ENCODE measurements at regions of chr4 and their contacts with region 1.

Region 1: GRCh38 chr4:15882675-15883086 is 55.9 kb downstream of the FGFBP1 start:
- DNase-seq: peak; percentile 47 to 51
- H3K4me3 ChIP-seq: no peak overlapping the region
- H3K27ac ChIP-seq: no peak overlapping the region
- H3K4me1 ChIP-seq: peaks cover 0 to 6% (median 0%) of the 10 kb centered on the region in 4 experiments; a peak in 1 of 7 replicates
- H3K27me3 ChIP-seq: no peaks in the 10 kb centered on the region
- CTCF ChIP-seq: peak; percentile 77 to 99 (median 90)
- EP300 ChIP-seq: no peak
- POLR2A ChIP-seq: no peak
- RAD21 ChIP-seq: peak; percentile 89 to 90

Region 2: DNA sequence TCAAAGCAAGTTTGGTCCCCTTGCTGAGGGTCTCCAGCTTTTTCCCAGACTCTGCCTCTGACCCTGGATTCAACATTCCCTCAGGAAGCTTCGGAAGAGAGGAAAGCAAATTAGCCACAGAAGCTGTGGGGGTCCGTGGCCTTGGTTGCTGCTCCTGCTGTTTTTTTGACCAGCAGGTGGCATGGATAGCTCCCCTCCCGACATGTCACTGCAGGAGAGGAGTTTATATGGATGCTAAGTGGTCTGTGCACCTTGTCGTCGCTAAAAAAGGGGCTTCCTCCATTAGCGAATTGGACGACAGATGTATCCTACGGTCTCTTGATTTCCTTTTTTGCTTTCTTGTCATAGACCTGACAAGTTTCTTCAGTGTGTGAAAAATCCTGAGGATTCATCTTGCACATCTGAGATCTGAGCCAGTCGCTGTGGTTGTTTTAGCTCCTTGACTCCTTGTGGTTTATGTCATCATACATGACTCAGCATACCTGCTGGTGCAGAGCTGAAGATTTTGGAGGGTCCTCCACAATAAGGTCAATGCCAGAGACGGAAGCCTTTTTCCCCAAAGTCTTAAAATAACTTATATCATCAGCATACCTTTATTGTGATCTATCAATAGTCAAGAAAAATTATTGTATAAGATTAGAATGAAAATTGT is 34.4 kb before region 1 on chr4:
- CTCF ChIA-PET with region 1: interaction called, 20 read pairs
- POLR2A ChIA-PET with region 1: no interaction called
- DNase-seq: no peak
- H3K4me3 ChIP-seq: no peak overlapping the region
- H3K27ac ChIP-seq: no peak overlapping the region
- H3K4me1 ChIP-seq: no peaks in the 10 kb centered on the region
- H3K27me3 ChIP-seq: peaks cover 0 to 1% (median 0%) of the 10 kb centered on the region in 4 experiments; a peak in 1 of 7 replicates
- CTCF ChIP-seq: no peak
- EP300 ChIP-seq: no peak
- POLR2A ChIP-seq: no peak
- RAD21 ChIP-seq: no peak

Region 3: DNA sequence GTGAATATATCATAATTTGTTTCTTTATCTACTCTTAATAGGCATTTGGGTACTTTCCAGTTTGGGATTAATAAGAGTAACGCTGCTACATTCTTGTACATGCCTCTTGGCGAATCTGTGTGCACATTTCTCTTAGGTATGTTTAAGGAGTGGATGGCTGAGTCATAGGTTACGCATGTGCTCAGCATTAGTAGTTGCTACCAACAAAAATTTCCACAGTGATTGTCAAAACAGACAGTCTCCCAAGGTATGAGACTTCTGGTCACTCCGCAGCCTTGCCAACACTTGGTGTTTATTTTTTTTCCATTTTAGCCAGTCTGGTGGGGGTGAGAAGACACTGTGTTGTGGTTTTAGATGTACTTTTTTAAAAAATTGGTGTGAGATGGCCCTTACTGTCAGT is 11.3 kb after region 1 on chr4:
- CTCF ChIA-PET with region 1: interaction called, 28 read pairs
- POLR2A ChIA-PET with region 1: no interaction called
- DNase-seq: no peak
- H3K4me3 ChIP-seq: no peak overlapping the region
- H3K27ac ChIP-seq: no peak overlapping the region
- H3K4me1 ChIP-seq: peaks cover 0 to 5% (median 0%) of the 10 kb centered on the region in 4 experiments; a peak in 2 of 7 replicates
- H3K27me3 ChIP-seq: no peaks in the 10 kb centered on the region
- CTCF ChIP-seq: no peak
- EP300 ChIP-seq: no peak
- POLR2A ChIP-seq: no peak
- RAD21 ChIP-seq: no peak

Region 4: DNA sequence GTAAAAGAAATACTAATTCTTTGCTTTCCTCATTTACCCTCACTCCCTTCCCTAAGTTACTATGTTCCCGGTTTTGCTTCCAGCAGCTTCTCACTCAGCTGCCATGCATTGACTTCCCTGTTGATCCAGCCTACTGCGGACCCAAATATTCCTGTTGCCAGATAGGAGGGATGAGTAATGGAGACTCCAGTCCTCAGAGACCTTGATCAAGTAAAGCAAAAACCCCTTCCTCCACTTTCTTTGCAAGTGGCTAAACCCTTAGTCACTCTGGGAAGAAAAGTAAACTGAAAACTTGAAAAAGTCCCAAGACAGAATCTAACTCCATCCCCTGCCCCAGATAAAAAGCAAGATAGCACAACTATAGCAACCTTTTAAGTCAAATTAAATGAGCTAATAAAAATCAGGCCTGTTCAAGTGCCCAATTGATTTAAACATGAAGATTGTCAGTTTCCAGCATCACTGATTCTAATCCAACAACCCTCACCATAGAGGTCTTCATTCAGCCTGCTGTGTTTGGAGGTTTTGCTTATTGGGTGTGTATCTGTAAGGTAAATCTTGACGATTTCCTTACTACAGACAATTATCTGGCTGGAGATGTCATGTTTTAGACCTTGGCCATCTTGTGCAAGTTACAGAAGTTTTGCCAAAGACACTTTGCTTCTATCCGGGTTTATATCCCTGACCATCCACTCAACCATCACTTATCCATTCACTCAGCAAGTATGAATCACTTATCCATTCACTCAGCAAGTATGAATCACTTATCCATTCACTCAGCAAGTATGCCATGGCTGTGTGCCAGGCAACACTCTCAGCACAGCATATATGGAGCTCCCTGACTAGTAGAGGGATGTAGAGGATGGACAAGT is 38.3 kb after region 1 on chr4:
- CTCF ChIA-PET with region 1: interaction called, 40 read pairs
- POLR2A ChIA-PET with region 1: no interaction called
- DNase-seq: no peak
- H3K4me3 ChIP-seq: no peak overlapping the region
- H3K27ac ChIP-seq: no peak overlapping the region
- H3K4me1 ChIP-seq: no peaks in the 10 kb centered on the region
- H3K27me3 ChIP-seq: no peaks in the 10 kb centered on the region
- CTCF ChIP-seq: no peak
- EP300 ChIP-seq: no peak
- POLR2A ChIP-seq: no peak
- RAD21 ChIP-seq: no peak

Region 5: DNA sequence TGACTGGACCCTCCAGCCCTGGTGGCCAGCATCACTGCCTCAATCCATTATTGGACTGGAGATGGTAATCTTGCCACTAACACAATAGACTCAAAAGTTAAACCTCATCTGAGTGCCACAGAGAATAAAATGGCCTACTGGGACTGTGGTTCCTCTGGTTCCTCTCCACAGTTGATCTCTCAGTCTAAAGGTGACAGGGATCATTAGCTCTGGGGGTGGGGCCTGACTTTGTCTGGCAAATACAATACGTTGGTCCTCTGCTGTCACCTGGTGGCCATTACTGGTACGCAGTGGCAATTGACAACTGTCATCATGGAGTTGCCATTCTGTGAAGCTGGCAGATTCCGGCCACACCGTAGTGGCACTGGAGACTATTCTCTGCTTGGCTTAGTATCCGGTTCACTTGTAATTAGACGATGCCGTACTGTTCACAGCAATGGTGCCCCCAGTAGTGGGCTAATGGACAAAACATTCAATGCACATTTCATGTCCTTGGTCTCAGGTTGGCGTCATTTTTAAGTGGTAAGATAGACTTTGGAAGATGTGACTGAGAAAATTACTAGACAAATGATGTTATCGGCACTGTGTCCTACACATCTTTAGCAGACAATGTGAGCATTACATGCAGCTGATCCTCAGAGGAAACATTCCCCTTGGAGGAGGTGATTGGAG is 73.6 kb after region 1 on chr4:
- CTCF ChIA-PET with region 1: interaction called, 114 read pairs
- POLR2A ChIA-PET with region 1: interaction called, 4 read pairs
- DNase-seq: peak in 1 of 2 experiments; percentile 92
- H3K4me3 ChIP-seq: no peak overlapping the region
- H3K27ac ChIP-seq: no peak overlapping the region
- H3K4me1 ChIP-seq: peaks cover 0 to 4% (median under 1%) of the 10 kb centered on the region in 4 experiments; a peak in 2 of 7 replicates
- H3K27me3 ChIP-seq: no peaks in the 10 kb centered on the region
- CTCF ChIP-seq: peak; percentile 74 to 98 (median 97)
- EP300 ChIP-seq: no peak
- POLR2A ChIP-seq: no peak
- RAD21 ChIP-seq: peak; percentile 99

Region 6: DNA sequence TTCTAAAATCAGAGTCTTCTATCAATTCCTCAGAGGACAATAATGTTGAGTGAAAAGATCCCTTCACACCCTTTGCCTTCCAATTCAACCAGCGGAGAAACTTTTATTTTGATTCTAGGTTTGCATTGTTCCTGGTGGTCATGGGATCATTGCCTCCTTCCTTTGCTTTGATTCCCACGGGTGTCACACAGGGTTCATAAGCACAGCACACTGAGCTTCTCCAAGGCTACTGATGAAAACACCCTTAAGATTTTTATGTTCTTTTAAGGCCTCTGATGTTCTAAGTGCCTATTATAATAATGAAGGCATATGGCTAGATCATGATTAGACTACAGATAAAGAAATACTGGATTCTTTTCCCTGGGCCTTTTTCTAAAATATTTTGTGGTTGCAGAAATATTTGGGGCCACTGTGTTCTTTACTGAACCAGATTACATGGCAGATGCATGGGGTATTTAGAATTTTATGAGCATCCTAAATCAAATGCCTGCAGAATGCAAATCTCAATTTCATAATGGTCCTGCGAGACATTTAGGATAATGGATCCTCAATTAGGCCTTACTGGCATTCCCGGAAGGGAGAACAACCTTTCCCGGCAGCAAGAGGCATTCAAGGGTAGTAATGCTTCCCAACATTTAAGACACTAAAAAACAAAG is 124.2 kb after region 1 on chr4:
- CTCF ChIA-PET with region 1: interaction called, 17 read pairs
- POLR2A ChIA-PET with region 1: no interaction called
- DNase-seq: no peak
- H3K4me3 ChIP-seq: no peak overlapping the region
- H3K27ac ChIP-seq: no peak overlapping the region
- H3K4me1 ChIP-seq: no peaks in the 10 kb centered on the region
- H3K27me3 ChIP-seq: no peaks in the 10 kb centered on the region
- CTCF ChIP-seq: no peak
- EP300 ChIP-seq: no peak
- POLR2A ChIP-seq: no peak
- RAD21 ChIP-seq: no peak